H1 (cell line): ENCODE measurements at regions of chr16 and their contacts with region 1.

Region 1: DNA sequence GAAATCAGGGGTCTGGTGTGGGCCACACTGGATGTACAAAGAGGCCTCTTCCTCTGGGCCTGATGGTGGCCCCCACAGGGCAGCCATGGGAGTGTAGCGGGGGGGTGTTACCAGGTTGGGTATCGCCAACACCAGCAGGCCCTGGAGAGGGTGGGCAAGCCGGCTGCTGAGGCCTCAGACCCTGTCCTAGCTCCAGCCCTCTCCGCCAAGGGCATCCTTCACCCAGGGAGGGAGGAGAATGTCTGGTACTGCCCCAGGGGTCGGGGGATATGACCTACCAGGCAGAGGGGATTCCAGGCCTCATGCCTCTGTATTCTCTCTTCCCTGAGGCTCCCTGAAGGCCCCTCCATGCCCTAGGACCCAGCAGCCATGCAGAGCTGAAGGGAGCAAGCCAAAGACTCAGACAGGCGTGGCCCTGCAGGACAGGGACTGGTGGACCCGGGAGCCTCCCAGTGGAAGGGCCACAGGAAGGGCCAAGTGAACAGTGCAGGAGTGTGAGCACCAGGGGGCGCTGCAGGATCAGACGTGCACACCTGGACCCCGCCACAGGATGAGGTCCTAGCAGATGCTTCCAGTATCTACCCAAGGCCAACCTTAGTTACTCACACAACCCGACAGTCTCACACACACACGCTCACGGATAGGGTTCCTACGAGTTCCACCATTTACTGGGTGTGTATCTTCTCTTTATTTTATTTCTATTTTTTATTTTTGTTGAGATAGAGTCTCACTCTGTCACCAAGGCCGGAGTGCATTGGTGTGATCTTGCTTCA is 10.9 kb upstream of the CES4A start:
- DNase-seq: peak; percentile 56 to 98
- H3K4me3 ChIP-seq: no peak overlapping the region
- H3K27ac ChIP-seq: no peak overlapping the region
- H3K4me1 ChIP-seq: no peaks in the 10 kb centered on the region; a peak in 1 of 7 replicates
- H3K27me3 ChIP-seq: no peaks in the 10 kb centered on the region
- CTCF ChIP-seq: peak; percentile 94 to 98 (median 97)
- EP300 ChIP-seq: no peak
- POLR2A ChIP-seq: no peak
- RAD21 ChIP-seq: peak; percentile 99 to 100

Region 2: DNA sequence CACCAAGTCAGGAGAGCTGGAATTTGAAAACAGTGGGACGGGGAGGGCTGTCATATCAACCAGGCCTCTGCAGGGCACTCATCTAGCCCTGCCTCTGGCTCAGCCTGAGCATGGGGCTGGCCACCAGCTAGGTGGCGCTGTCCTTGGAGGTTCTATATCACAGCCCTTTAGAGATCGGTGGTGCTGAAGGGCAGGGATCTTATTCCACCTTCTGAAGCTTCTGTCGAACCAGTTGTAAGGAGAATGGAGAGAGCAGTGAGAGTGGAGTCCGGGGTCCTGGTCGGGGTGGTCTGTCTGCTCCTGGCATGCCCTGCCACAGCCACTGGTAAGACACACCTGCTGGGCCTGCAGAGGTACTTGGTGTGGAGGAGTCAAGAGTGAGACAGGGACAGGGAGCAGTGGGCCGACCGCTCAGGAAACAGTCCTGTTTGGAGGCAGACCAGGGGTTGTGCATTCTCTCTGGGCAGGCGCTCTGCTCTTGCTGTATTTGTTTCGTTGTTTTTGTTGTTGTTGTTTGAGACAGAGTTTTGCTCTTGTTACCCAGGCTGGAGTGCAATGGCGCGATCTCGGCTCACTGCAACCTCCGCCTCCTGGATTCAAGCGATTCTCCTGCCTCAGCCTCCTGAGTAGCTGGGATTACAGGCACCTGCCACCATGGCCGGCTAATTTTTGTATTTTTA is 16.3 kb before region 1 on chr16 and contains the start of gene CES3:
- CTCF ChIA-PET with region 1: interaction called, 130 read pairs
- POLR2A ChIA-PET with region 1: interaction called, 6 read pairs
- DNase-seq: peak; percentile 79 to 87
- H3K4me3 ChIP-seq: peak within 1 kb of the TSS; percentile 8 to 50 (median 24); a peak in 6 of 8 replicates
- H3K27ac ChIP-seq: no peak within 1 kb of the TSS
- H3K4me1 ChIP-seq: peaks cover 0 to 3% (median under 1%) of the 10 kb centered on the region in 4 experiments; a peak in 3 of 7 replicates
- H3K27me3 ChIP-seq: no peaks in the 10 kb centered on the region
- CTCF ChIP-seq: peak; percentile 97 to 99 (median 99)
- EP300 ChIP-seq: no peak
- POLR2A ChIP-seq: peak in 1 of 2 experiments; percentile 37; a peak in 1 of 3 replicates
- RAD21 ChIP-seq: peak; percentile 33 to 48; a peak in 3 of 4 replicates
- total RNA-seq, gene CES3: 1.6 and 1.7 TPM in 2 replicates

Region 3: GRCh38 chr16:67104061-67104460 is 126.5 kb after region 1 on chr16:
- CTCF ChIA-PET with region 1: interaction called, 51 read pairs
- POLR2A ChIA-PET with region 1: interaction called, 3 read pairs
- DNase-seq: peak in 1 of 2 experiments; percentile 64
- H3K4me3 ChIP-seq: no peak overlapping the region
- H3K27ac ChIP-seq: no peak overlapping the region
- H3K4me1 ChIP-seq: peaks cover 0 to 2% (median under 1%) of the 10 kb centered on the region in 4 experiments; a peak in 3 of 7 replicates
- H3K27me3 ChIP-seq: peaks cover 0 to 4% (median 1%) of the 10 kb centered on the region in 4 experiments; a peak in 2 of 7 replicates
- CTCF ChIP-seq: peak; percentile 64 to 84 (median 64)
- EP300 ChIP-seq: no peak
- POLR2A ChIP-seq: no peak
- RAD21 ChIP-seq: peak; percentile 21 to 40

Region 4: GRCh38 chr16:67150833-67151396 is 173.4 kb after region 1 on chr16 and contains the start of gene B3GNT9:
- CTCF ChIA-PET with region 1: interaction called, 38 read pairs
- POLR2A ChIA-PET with region 1: interaction called, 4 read pairs
- DNase-seq: peak in 1 of 2 experiments; percentile 88
- H3K4me3 ChIP-seq: peak within 1 kb of the TSS; percentile 62 to 75 (median 72)
- H3K27ac ChIP-seq: no peak within 1 kb of the TSS
- H3K4me1 ChIP-seq: peaks cover 0 to 13% (median 9%) of the 10 kb centered on the region in 4 experiments; a peak in 5 of 7 replicates
- H3K27me3 ChIP-seq: peaks cover 34 to 56% (median 47%) of the 10 kb centered on the region in 4 experiments
- CTCF ChIP-seq: no peak
- EP300 ChIP-seq: no peak
- POLR2A ChIP-seq: no peak
- RAD21 ChIP-seq: no peak
- total RNA-seq, gene B3GNT9: 3.5 and 4.7 TPM in 2 replicates

Region 5: DNA sequence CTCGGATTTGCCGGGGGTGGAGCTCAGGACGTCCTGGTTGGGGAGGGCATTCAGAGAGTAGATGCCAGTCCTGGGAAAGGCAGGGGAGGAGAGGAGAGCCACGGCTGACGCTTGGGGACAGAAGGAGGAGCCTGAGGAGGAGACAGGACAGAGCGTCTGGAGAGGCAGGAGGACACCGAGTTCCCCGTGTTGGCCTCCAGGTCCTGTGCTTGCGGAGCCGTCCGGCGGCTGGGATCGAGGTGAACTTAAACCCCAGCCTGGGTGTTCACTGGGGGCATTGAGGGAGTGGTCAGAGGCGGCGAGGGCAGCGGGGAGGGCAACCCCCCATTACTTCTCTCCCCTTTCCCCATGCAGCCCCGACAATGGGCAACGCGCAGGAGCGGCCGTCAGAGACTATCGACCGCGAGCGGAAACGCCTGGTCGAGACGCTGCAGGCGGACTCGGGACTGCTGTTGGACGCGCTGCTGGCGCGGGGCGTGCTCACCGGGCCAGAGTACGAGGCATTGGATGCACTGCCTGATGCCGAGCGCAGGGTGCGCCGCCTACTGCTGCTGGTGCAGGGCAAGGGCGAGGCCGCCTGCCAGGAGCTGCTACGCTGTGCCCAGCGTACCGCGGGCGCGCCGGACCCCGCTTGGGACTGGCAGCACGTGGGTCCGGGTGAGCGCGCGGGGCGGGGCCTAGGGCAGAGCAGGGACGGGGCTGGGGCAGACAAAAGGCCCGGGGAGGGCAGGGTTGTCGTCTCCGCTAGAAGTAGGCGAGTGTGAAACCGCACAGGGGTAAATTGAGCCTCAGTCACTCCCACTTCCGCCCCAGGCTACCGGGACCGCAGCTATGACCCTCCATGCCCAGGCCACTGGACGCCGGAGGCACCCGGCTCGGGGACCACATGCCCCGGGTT is 196.5 kb after region 1 on chr16:
- CTCF ChIA-PET with region 1: interaction called, 31 read pairs
- POLR2A ChIA-PET with region 1: no interaction called
- DNase-seq: peak in 1 of 2 experiments; percentile 78
- H3K4me3 ChIP-seq: peak overlapping the region; percentile 27 to 57 (median 34)
- H3K27ac ChIP-seq: no peak overlapping the region
- H3K4me1 ChIP-seq: peaks cover 0 to 40% (median 30%) of the 10 kb centered on the region in 4 experiments; a peak in 6 of 7 replicates
- H3K27me3 ChIP-seq: peaks cover 50 to 90% (median 86%) of the 10 kb centered on the region in 4 experiments
- CTCF ChIP-seq: peak in 2 of 3 experiments; percentile 14 to 15; a peak in 2 of 4 replicates
- EP300 ChIP-seq: no peak
- POLR2A ChIP-seq: no peak
- RAD21 ChIP-seq: peak; percentile 7 to 23; a peak in 2 of 4 replicates

Region 6: GRCh38 chr16:67364600-67365235 is 387.2 kb after region 1 on chr16:
- CTCF ChIA-PET with region 1: no interaction called
- POLR2A ChIA-PET with region 1: no interaction called
- DNase-seq: no peak
- H3K4me3 ChIP-seq: no peak overlapping the region
- H3K27ac ChIP-seq: no peak overlapping the region
- H3K4me1 ChIP-seq: no peaks in the 10 kb centered on the region
- H3K27me3 ChIP-seq: no peaks in the 10 kb centered on the region; a peak in 1 of 7 replicates
- CTCF ChIP-seq: no peak
- EP300 ChIP-seq: no peak
- POLR2A ChIP-seq: no peak
- RAD21 ChIP-seq: no peak